MCF 10A (cell line): ENCODE measurements at regions of chr16 and their contacts with region 1.

Region 1: DNA sequence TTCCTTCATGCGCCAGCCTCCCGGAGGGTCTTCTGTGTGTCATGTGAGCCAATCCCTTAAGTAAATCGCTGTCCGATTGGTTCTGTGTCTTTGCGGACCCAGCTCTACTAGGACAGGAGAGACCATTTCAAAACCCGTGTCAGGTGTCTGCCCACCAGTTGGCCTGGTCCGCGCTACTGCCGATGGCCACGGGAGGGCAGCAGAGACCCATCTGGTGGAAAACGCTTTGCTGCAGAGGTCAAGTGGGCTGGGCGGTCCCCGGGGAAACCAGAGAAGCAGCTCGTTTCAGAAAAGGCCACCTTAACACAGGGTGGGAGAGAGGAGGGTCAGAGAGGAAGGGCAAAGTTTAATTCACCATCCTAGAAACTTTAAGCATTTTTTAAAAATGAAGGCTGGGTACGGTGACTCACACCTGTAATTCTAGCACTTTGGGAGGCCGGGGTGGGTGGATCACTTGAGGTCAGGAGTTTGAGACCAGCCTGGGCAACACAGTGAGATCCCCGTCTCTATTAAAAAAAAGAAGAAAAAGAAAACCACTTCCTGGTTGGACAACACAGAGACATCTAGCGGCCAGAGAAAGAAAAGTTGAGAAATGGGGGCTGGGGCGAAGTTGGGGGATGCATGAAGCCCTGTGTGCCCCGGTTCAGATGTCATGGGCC is 2.8 kb upstream of the CIBAR2 start:
- DNase-seq: peak; percentile 80
- H3K4me3 Mint-ChIP-seq: peak overlapping the region; percentile 58
- H3K27ac Mint-ChIP-seq: peak overlapping the region; percentile 68
- H3K4me1 Mint-ChIP-seq: peaks cover 6% of the 10 kb centered on the region
- H3K27me3 Mint-ChIP-seq: no peaks in the 10 kb centered on the region
- CTCF ChIP-seq: peak; percentile 96

Region 2: DNA sequence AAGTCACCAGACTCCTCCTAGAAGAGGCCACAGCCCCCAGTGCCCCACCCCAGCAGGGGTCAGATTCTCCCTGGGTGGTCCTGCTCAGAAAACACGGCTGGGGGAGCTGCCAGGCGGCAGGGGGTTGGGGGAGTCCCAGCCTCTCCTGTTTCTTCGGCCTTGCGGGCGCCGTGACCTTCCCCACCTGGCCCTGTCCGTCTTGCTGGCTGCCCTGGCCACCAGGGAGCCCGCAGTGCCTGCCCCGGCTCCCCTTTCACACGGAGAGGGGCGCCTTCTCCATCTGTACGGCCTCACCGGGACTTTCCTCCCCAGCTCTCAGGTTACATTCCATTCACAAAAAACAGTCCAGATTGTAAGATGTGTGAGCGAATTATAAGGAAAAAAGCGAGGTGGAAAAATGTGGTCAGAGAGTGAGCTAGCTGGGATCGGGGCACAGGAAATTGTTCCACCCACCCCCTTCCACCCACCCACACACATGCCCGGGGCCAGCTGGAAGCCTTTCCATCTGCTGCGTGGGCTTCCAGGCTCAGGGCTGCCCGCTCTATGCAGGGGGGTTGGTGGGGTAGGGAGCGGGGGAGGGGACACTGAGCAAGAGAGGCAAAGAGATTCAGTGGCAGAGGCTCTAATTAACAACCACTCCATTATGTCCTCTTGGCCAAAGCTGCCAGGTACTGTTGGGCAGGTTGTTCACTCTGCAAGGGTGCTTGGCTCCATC is 11.8 kb after region 1 on chr16:
- CTCF ChIA-PET with region 1: interaction called, 31 read pairs
- POLR2A ChIA-PET with region 1: no interaction called
- intact Hi-C with region 1: no loop called
- DNase-seq: peak; percentile 38
- H3K4me3 Mint-ChIP-seq: no peak overlapping the region
- H3K27ac Mint-ChIP-seq: no peak overlapping the region
- H3K4me1 Mint-ChIP-seq: no peaks in the 10 kb centered on the region
- H3K27me3 Mint-ChIP-seq: no peaks in the 10 kb centered on the region
- CTCF ChIP-seq: no peak

Region 3: DNA sequence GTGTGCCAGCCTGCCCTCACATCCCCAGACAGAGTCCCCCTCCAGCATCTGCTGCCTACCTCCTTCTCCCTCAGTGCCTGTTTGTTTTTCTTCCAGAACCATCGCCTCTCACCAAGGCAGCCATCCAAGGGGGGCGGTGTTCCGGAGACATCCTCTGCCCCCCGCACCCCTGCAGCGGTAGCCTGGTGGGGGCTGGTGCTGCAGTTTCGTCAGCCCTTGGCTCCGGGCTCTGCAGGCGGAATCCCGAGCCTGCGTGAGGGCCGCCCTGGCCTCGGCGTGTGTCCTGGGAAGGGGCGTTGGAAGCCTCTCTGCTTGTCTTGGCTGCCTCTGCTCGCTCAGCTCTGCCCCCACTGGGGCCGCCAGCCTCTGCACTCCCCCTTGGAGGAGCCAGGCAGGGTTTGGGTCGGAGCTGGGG is 123.2 kb after region 1 on chr16:
- CTCF ChIA-PET with region 1: interaction called, 10 read pairs
- POLR2A ChIA-PET with region 1: no interaction called
- intact Hi-C with region 1: loop called (anchors 10 kb)
- DNase-seq: no peak
- H3K4me3 Mint-ChIP-seq: no peak overlapping the region
- H3K27ac Mint-ChIP-seq: no peak overlapping the region
- H3K4me1 Mint-ChIP-seq: no peaks in the 10 kb centered on the region
- H3K27me3 Mint-ChIP-seq: no peaks in the 10 kb centered on the region
- CTCF ChIP-seq: no peak

Region 4: GRCh38 chr16:85245307-85246172 is 130.5 kb after region 1 on chr16:
- CTCF ChIA-PET with region 1: interaction called, 10 read pairs
- POLR2A ChIA-PET with region 1: interaction called, 4 read pairs
- intact Hi-C with region 1: loop called (anchors 10 kb)
- DNase-seq: peak; percentile 62
- H3K4me3 Mint-ChIP-seq: no peak overlapping the region
- H3K27ac Mint-ChIP-seq: no peak overlapping the region
- H3K4me1 Mint-ChIP-seq: peaks cover 11% of the 10 kb centered on the region
- H3K27me3 Mint-ChIP-seq: peaks cover 12% of the 10 kb centered on the region
- CTCF ChIP-seq: peak; percentile 71

Region 5: GRCh38 chr16:85258629-85259028 is 143.6 kb after region 1 on chr16:
- CTCF ChIA-PET with region 1: interaction called, 12 read pairs
- POLR2A ChIA-PET with region 1: no interaction called
- intact Hi-C with region 1: no loop called
- DNase-seq: no peak
- H3K4me3 Mint-ChIP-seq: no peak overlapping the region
- H3K27ac Mint-ChIP-seq: no peak overlapping the region
- H3K4me1 Mint-ChIP-seq: no peaks in the 10 kb centered on the region
- H3K27me3 Mint-ChIP-seq: no peaks in the 10 kb centered on the region
- CTCF ChIP-seq: no peak

Region 6: GRCh38 chr16:85275533-85276249 is 160.7 kb after region 1 on chr16:
- CTCF ChIA-PET with region 1: interaction called, 7 read pairs
- POLR2A ChIA-PET with region 1: no interaction called
- intact Hi-C with region 1: loop called (anchors 1 kb)
- DNase-seq: peak; percentile 70
- H3K4me3 Mint-ChIP-seq: no peak overlapping the region
- H3K27ac Mint-ChIP-seq: no peak overlapping the region
- H3K4me1 Mint-ChIP-seq: no peaks in the 10 kb centered on the region
- H3K27me3 Mint-ChIP-seq: no peaks in the 10 kb centered on the region
- CTCF ChIP-seq: peak; percentile 89

Region 7: DNA sequence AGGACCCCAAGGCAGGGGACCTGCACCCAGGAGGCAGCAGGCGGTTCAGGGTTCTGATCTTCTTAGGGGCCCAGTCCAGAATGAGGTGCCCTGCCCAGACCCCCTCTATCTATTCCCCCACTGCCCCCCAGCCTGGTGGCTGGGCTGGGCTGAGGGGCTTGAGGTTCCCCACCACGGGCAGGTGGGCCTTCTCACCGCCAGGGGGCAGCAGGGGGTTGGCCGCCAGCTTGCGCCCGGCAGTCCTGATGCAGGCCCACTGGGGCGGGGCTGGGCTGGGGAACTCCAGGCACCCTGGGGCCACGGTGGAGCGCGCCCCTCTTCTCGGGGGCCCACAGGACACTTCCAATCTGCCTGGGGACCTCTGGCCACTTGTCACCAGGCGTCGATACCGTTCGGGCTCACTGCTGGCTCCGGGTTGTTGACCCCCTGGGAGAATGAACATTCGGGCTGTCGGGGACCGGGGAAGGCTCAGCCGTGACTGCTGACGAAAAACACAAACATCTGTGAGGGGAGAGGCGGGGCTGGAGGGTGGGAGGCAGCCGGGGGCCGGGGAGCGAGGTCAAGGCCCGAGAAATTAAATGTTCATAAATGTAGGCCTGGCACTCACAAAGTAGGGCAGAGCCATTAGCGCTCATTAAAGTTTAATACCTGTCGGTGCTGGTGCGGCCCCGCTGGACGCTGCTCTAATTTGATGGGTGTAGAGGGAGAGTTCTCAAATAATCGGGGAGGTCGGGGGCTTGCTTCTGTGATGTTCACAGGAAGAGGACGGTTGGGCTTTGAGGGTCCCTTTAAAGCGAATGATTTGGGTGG is 278.8 kb after region 1 on chr16:
- CTCF ChIA-PET with region 1: no interaction called
- POLR2A ChIA-PET with region 1: no interaction called
- intact Hi-C with region 1: loop called (anchors 5 kb)
- DNase-seq: no peak
- H3K4me3 Mint-ChIP-seq: no peak overlapping the region
- H3K27ac Mint-ChIP-seq: no peak overlapping the region
- H3K4me1 Mint-ChIP-seq: peaks cover 47% of the 10 kb centered on the region
- H3K27me3 Mint-ChIP-seq: no peaks in the 10 kb centered on the region
- CTCF ChIP-seq: peak; percentile 44